ENCODE measurements at regions of chr10 and their contacts with region 1.

Region 1: DNA sequence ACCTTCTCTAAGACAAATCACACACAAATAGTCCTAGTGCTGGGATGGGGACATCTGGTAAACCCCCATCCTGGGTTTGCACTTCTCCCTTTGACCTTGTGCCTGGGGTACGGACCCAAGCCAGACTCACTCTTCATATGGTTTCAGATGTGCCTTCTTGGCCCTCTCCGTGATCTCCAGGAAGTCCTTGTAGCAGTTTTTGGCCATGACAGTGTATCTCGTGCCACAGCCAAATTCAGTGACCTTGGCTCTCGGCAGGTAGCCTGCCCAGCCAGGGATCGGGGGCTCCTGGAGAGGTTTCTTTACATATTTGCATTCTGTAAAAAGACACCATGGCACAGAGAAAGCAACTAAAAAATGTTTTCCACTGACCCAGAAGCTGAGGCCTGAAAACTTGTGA is 43.9 kb downstream of the PNLIPRP2 start:
- DNase-seq: no peak
- H3K4me3 ChIP-seq: no peak overlapping the region
- H3K27ac ChIP-seq: no peak overlapping the region
- H3K4me1 ChIP-seq: peaks cover 0 to 3% (median 0%) of the 10 kb centered on the region in 4 donors
- H3K27me3 ChIP-seq: peaks cover 4% of the 10 kb centered on the region
- CTCF ChIP-seq: no peak
- EP300 ChIP-seq: no peak
- POLR2A ChIP-seq: no peak

Region 2: GRCh38 chr10:116565533-116565932 is 99.1 kb before region 1 on chr10:
- in situ Hi-C with region 1: no loop called
- intact Hi-C with region 1: no loop called
- DNase-seq: no peak
- H3K4me3 ChIP-seq: no peak overlapping the region
- H3K27ac ChIP-seq: no peak overlapping the region
- H3K4me1 ChIP-seq: no peaks in the 10 kb centered on the region
- H3K27me3 ChIP-seq: no peaks in the 10 kb centered on the region
- CTCF ChIP-seq: no peak
- EP300 ChIP-seq: no peak
- POLR2A ChIP-seq: no peak

Region 3: DNA sequence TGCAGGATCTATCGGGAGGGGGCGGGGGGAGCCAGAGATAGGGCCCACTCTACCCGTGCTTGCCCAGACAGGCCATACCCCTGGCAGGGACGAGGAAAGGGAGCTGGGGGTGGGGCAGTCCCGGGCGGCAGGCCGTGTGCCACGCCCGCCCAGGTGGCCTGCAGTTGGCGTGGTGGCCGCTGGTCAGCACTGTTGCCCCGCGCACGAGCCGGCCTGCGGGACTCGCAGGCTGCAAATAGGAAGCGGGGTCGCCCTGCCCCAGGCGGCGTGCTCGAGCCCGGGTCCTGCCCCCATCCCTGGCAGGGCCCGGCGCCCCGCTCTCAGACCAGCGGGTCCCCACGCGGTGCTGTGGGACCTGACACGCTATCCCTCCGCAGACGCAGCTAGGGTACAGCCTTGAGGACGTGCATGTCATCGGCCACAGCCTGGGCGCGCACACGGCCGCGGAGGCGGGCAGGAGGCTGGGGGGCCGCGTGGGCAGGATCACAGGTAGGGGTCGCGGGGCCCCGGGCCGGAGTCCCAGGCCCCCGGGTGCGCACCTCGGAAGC is 37.2 kb before region 1 on chr10:
- in situ Hi-C with region 1: no loop called
- intact Hi-C with region 1: loop called (anchors 1 kb)
- DNase-seq: peak; percentile 68
- H3K4me3 ChIP-seq: peak overlapping the region in 3 of 4 donors; percentile 32 to 47 (median 36)
- H3K27ac ChIP-seq: no peak overlapping the region
- H3K4me1 ChIP-seq: peaks cover 0 to 6% (median 0%) of the 10 kb centered on the region in 4 donors
- H3K27me3 ChIP-seq: peaks cover 7% of the 10 kb centered on the region
- CTCF ChIP-seq: peak; percentile 53 to 76 (median 54)
- EP300 ChIP-seq: no peak
- POLR2A ChIP-seq: no peak

Region 4: DNA sequence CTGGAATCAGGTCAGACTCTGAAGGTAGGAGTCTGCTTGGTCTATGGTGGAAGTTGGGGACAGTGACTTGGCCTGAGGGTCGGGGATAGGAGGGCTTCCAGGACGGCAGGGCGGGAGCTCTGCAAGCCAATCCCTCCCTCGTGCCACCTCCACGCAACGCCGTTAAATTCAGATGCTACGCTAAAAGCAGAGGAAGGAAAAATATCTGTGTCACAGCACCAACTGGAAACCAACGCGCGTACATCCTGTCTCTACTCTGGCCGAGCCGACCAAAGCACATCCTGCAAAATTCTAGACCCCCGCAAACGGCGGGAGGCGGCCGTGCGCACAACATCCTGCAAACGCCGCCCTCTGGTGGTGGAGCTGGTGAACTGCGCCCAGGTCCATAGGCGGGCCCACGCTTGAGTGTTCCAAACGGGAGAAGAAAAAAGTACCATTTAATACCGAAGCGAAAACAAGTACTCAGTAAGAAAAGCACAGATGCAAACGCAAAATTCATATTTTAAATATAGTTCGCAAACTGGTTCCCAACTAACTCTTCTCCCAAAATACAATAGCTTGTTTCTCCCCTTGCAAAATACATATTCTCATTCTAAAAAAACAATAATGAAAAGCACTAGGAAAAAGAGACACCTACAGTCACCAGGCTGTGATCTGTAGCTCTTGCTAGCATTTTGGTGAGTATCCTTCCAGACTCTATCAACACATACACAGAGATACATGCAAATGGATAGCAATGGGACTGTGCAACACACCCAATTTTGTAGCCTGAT is 123.4 kb after region 1 on chr10:
- in situ Hi-C with region 1: no loop called
- intact Hi-C with region 1: no loop called
- DNase-seq: peak; percentile 72
- H3K4me3 ChIP-seq: peak overlapping the region in 2 of 4 donors; percentile 7 to 25
- H3K27ac ChIP-seq: no peak overlapping the region
- H3K4me1 ChIP-seq: peaks cover 0 to 9% (median 0%) of the 10 kb centered on the region in 4 donors
- H3K27me3 ChIP-seq: no peaks in the 10 kb centered on the region
- CTCF ChIP-seq: peak; percentile 95 to 100 (median 99)
- EP300 ChIP-seq: no peak
- POLR2A ChIP-seq: no peak

Measured in transverse colon (tissue), 4 donors.